ENCODE measurements at regions of chr12 and their contacts with region 1.

Region 1: DNA sequence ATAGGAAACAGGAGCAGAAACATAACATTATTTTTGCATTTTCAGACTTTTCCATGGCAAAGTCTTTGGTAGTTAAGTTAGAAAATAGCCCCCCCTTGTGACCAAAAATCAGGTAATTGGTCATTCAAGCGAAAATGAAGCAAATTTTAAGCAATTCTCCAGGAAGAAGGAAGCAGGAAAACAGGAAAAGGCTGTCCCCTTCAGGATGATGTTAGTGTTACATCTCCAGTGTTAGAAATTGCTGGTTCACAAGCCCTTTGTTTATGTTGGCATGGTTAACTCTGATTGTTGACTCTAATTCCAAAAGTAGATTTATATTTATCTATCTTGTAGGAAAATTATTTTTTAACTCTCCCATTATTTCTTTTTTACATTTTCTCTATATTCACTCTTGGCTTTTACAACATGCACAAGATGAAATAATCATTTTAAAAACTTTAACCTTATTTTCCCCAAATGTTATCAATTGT is 18.8 kb upstream of the GAS2L3 start:
- DNase-seq: no peak
- H3K4me3 ChIP-seq: no peak overlapping the region
- H3K27ac ChIP-seq: no peak overlapping the region
- H3K4me1 ChIP-seq: no peaks in the 10 kb centered on the region
- H3K27me3 ChIP-seq: no peaks in the 10 kb centered on the region
- CTCF ChIP-seq: peak; percentile 86 to 96 (median 92)
- EP300 ChIP-seq: no peak
- POLR2A ChIP-seq: no peak

Region 2: DNA sequence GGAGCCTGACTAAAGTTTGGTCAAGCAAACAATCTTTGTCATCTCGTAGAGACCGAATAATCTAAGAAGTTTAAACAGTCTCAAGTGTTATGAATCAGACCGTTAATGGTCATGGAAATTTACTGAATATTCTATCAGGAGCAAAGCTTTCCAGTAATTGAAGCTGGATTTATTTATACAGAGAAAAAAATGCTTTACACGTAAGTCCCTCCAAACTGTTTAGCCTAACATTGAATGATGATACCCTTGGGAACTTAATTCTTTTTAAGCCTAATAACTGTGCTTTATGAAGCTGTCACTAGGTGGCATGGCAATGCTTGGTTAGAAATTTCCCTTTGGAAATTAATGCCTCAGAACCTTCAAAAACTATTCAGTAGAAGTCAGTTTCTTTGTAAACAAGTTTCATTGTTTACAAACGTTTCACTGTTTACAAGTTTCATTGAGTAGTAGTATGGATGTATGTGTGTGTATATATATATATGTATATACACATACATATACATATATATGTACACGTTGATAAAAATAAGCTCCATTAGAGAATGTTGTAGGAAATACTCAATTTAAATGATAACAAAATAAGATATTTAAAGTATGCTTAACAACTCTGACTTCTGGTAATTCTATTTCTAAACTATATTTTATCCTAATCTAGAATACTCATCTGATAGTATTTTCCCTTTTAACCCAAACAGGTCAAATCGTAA is 319.9 kb before region 1 on chr12:
- intact Hi-C with region 1: loop called (anchors 5 kb)
- DNase-seq: no peak
- H3K4me3 ChIP-seq: no peak overlapping the region
- H3K27ac ChIP-seq: peak overlapping the region in 2 of 4 donors; percentile 23 to 34
- H3K4me1 ChIP-seq: peaks cover 0 to 8% (median 0%) of the 10 kb centered on the region in 4 donors
- H3K27me3 ChIP-seq: no peaks in the 10 kb centered on the region
- CTCF ChIP-seq: peak in 3 of 4 experiments; percentile 42 to 69 (median 45)
- EP300 ChIP-seq: no peak
- POLR2A ChIP-seq: no peak

Region 3: DNA sequence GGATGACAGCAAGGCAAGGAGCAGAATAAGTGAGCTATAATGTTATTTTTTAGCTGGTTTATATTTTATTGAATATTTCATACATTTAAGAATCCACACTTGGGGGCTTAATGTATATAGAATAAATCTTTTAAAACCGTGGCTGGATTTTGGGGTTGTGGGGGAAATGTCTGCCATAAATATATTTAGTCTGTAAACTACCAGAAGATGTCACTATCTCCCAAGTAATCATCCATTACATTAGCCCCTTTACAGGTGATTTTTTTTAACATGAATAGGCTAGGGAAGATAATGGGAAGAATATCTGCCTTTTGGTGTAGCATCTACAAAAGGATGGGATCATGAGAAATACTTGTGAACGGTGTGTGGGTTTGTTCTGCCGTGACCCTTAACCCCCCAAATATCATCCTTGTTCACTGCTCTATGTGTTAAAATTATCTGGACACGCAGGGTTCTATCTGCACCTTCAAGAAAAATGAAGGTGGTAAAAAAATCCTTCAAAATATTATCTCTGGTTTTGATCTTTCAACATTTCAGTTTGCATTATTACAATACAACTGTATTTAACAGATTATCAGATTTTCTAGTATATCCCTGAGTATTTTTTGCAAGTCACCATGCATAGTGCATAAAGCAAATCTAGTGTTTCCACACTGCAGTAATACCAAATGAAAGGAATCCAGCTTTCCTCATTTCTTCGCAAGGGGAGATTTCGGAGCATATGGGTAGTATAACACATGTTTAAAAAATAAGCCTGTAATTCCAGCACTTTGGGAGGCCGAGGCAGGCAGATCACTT is 205.8 kb before region 1 on chr12:
- intact Hi-C with region 1: loop called (anchors 2 kb)
- DNase-seq: no peak
- H3K4me3 ChIP-seq: no peak overlapping the region
- H3K27ac ChIP-seq: no peak overlapping the region
- H3K4me1 ChIP-seq: no peaks in the 10 kb centered on the region
- H3K27me3 ChIP-seq: no peaks in the 10 kb centered on the region
- CTCF ChIP-seq: peak in 3 of 4 experiments; percentile 12 to 39 (median 37)
- EP300 ChIP-seq: no peak
- POLR2A ChIP-seq: no peak

Region 4: DNA sequence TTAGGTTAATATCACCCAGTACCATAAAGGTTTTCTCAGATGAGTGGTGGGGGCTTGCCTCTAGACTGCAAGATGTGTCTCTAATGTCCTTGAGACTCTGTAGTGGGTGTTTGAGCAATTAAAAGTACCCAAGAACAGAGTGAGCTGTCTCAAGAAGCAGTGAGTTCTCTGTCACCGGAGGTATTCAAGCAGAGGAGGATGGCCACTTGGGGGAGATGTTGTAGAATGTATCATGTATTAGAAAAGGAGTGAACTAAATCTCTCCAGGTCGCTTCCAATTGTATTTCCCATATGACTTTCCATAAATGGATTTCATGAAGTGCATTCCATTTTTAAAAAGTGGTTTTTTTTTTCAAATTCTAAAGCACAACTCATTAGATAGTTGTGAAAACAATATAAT is 162.8 kb before region 1 on chr12:
- intact Hi-C with region 1: loop called (anchors 2 kb)
- DNase-seq: no peak
- H3K4me3 ChIP-seq: no peak overlapping the region
- H3K27ac ChIP-seq: no peak overlapping the region
- H3K4me1 ChIP-seq: no peaks in the 10 kb centered on the region
- H3K27me3 ChIP-seq: no peaks in the 10 kb centered on the region
- CTCF ChIP-seq: peak; percentile 14 to 51 (median 41)
- EP300 ChIP-seq: no peak
- POLR2A ChIP-seq: no peak